PC-9 (cell line): ENCODE measurements at regions of chr11 and their contacts with region 1.

Region 1: GRCh38 chr11:77752518-77752917 is 68.0 kb downstream of the RSF1 start:
- DNase-seq: no peak
- H3K4me3 ChIP-seq: no peak overlapping the region
- H3K27ac ChIP-seq: no peak overlapping the region
- H3K4me1 ChIP-seq: peaks cover 5% of the 10 kb centered on the region
- H3K27me3 ChIP-seq: no peaks in the 10 kb centered on the region
- CTCF ChIP-seq: no peak

Region 2: GRCh38 chr11:78061088-78061921 is 308.8 kb after region 1 on chr11:
- CTCF ChIA-PET with region 1: interaction called, 13 read pairs
- POLR2A ChIA-PET with region 1: no interaction called
- intact Hi-C with region 1: no loop called
- DNase-seq: no peak
- H3K4me3 ChIP-seq: no peak overlapping the region
- H3K27ac ChIP-seq: no peak overlapping the region
- H3K4me1 ChIP-seq: no peaks in the 10 kb centered on the region
- H3K27me3 ChIP-seq: no peaks in the 10 kb centered on the region
- CTCF ChIP-seq: no peak